CD4-positive, alpha-beta memory T cell (primary cell): ENCODE measurements at regions of chr3 and their contacts with region 1.

Region 1: DNA sequence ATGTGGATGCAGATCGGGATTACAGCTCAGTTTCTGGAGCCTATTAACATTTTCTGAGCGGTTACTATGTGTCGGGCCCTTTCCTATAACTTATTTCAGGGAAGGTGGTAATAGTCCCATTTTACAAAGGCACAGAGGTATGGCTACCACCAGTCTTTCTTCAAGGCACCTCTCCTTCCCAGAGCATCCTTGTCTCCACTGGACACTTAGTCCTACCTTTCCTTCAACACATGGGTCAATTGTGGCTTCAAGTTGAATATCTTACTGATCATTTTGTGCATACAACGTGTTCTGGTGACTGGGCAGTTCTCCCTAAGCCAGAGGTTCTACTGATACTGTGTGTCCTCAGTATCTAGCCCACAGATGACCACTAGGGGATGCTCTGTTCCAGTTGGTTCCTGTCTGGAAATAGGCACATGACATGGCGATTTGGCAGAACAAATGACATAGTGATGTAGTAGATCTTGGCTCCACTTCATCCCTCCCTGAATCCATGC is 60.7 kb upstream of the CMTM8 start:
- DNase-seq: peak; percentile 24 to 64 (median 44)
- H3K4me3 ChIP-seq: no peak overlapping the region
- H3K4me3 Mint-ChIP-seq: peak overlapping the region in 6 of 8 donors; percentile 54 to 68 (median 58)
- H3K27ac ChIP-seq: no peak overlapping the region
- H3K27ac Mint-ChIP-seq: peak overlapping the region in 4 of 7 donors; percentile 19 to 59 (median 28)
- H3K4me1 ChIP-seq: peaks cover 14% of the 10 kb centered on the region
- H3K4me1 Mint-ChIP-seq: peaks cover 8 to 12% (median 10%) of the 10 kb centered on the region in 4 donors
- H3K27me3 ChIP-seq: no peaks in the 10 kb centered on the region
- H3K27me3 Mint-ChIP-seq: no peaks in the 10 kb centered on the region

Region 2: DNA sequence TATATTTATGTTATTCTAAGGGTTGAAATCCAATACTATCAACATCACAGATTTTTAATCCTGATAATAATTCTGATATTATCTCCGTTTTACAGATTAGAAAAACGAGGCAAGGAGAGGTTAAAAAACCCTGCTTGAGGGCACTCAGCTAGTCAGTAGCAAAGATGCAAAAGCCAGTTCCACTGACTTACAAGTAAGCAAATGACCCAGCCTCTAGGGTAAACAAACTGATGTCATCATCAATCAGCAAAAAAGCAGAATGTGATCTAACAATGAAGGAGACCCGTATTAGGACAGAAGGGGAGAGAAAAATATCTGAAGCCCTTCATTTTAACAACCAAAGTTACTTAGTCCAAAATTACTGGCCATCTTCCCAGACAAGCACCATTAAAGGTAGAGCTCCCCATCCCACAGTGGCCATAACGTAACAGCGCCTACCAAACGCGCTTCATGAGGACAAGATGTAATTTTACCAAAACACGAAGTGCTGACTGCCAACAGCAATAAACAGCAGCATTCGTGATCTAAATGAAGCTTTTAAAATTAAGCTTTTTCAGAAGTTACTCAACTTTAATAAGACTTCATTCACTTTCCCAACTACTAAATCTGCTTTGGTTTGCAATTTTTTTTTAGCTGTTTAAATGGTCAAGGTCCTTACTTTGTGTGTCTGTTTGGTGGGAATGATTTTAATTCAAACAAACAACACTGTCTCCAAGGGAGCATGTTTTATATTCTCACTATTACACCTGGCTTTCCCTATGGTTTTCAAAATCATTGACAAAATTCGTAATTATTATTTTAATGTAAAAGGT is 373.3 kb before region 1 on chr3:
- CTCF ChIA-PET with region 1: no interaction called
- POLR2A ChIA-PET with region 1: no interaction called
- intact Hi-C with region 1: no loop called
- DNase-seq: no peak
- H3K4me3 ChIP-seq: no peak overlapping the region
- H3K4me3 Mint-ChIP-seq: no peak overlapping the region
- H3K27ac ChIP-seq: no peak overlapping the region
- H3K27ac Mint-ChIP-seq: no peak overlapping the region
- H3K4me1 ChIP-seq: no peaks in the 10 kb centered on the region
- H3K4me1 Mint-ChIP-seq: no peaks in the 10 kb centered on the region
- H3K27me3 ChIP-seq: no peaks in the 10 kb centered on the region
- H3K27me3 Mint-ChIP-seq: peaks cover 1 to 4% of the 10 kb centered on the region in 2 donors

Region 3: DNA sequence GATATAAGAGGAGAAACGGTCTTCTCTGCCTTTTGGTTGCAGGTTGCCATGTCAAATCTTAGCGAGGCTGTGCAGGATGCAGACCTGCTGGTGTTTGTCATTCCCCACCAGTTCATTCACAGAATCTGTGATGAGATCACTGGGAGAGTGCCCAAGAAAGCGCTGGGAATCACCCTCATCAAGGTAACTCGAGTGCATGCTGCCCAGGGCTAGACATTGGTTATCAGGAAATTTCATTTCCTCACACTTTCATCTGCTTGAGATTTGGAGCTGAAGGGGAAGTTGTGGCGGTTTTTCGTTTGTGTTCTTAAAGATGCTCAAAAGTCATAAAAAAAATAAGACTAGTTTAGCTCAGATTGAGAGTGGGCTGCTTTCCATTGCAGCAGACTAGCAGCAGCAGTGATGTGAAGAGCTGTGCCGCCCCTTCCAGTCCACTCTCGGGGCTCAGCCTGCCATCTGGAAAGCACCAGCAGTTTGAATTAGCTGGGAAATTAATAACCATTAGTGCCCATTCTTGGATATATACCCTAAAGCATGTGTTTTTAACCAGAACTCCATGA is 39.1 kb before region 1 on chr3:
- CTCF ChIA-PET with region 1: no interaction called
- POLR2A ChIA-PET with region 1: no interaction called
- intact Hi-C with region 1: no loop called
- DNase-seq: no peak
- H3K4me3 ChIP-seq: no peak overlapping the region
- H3K4me3 Mint-ChIP-seq: peak overlapping the region in 4 of 8 donors; percentile 22 to 59 (median 46)
- H3K27ac ChIP-seq: no peak overlapping the region
- H3K27ac Mint-ChIP-seq: peak overlapping the region in 4 of 7 donors; percentile 3 to 45 (median 6)
- H3K4me1 ChIP-seq: peaks cover 19% of the 10 kb centered on the region
- H3K4me1 Mint-ChIP-seq: peaks cover 19 to 36% (median 26%) of the 10 kb centered on the region in 4 donors
- H3K27me3 ChIP-seq: no peaks in the 10 kb centered on the region
- H3K27me3 Mint-ChIP-seq: no peaks in the 10 kb centered on the region

Region 4: GRCh38 chr3:32165442-32165841 is 12.3 kb before region 1 on chr3:
- CTCF ChIA-PET with region 1: interaction called, 10 read pairs
- POLR2A ChIA-PET with region 1: no interaction called
- intact Hi-C with region 1: no loop called
- DNase-seq: no peak
- H3K4me3 ChIP-seq: no peak overlapping the region
- H3K4me3 Mint-ChIP-seq: no peak overlapping the region
- H3K27ac ChIP-seq: no peak overlapping the region
- H3K27ac Mint-ChIP-seq: peak overlapping the region in 1 of 7 donors; percentile 22
- H3K4me1 ChIP-seq: no peaks in the 10 kb centered on the region
- H3K4me1 Mint-ChIP-seq: no peaks in the 10 kb centered on the region
- H3K27me3 ChIP-seq: no peaks in the 10 kb centered on the region
- H3K27me3 Mint-ChIP-seq: no peaks in the 10 kb centered on the region

Region 5: DNA sequence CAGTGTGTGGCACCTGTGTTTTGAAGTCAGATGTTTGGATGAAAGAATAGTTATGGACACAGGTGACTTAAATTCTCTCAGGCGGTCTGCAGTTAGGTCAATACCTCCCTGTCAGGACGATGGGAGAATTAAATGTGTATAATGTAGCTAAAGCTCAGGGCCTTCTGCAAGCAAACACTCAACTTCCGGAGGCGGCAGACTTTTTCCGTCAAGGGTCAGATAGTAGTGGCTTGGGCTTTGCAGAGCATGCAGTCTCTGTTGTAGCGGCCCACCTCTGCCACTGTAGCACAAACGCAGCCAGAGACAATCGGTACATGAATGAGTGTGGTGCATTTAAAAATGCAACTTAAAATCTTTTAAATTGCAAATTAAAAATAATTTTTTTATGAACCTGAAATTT is 108.1 kb after region 1 on chr3:
- CTCF ChIA-PET with region 1: interaction called, 76 read pairs
- POLR2A ChIA-PET with region 1: interaction called, 4 read pairs
- intact Hi-C with region 1: loop called (anchors 1 kb)
- DNase-seq: peak in 1 of 5 donors; percentile 46
- H3K4me3 ChIP-seq: no peak overlapping the region
- H3K4me3 Mint-ChIP-seq: peak overlapping the region in 7 of 8 donors; percentile 6 to 74 (median 59)
- H3K27ac ChIP-seq: peak overlapping the region; percentile 31
- H3K27ac Mint-ChIP-seq: peak overlapping the region; percentile 68 to 90 (median 83)
- H3K4me1 ChIP-seq: peaks cover 53% of the 10 kb centered on the region
- H3K4me1 Mint-ChIP-seq: peaks cover 30 to 62% (median 43%) of the 10 kb centered on the region in 4 donors
- H3K27me3 ChIP-seq: no peaks in the 10 kb centered on the region
- H3K27me3 Mint-ChIP-seq: no peaks in the 10 kb centered on the region

Region 6: DNA sequence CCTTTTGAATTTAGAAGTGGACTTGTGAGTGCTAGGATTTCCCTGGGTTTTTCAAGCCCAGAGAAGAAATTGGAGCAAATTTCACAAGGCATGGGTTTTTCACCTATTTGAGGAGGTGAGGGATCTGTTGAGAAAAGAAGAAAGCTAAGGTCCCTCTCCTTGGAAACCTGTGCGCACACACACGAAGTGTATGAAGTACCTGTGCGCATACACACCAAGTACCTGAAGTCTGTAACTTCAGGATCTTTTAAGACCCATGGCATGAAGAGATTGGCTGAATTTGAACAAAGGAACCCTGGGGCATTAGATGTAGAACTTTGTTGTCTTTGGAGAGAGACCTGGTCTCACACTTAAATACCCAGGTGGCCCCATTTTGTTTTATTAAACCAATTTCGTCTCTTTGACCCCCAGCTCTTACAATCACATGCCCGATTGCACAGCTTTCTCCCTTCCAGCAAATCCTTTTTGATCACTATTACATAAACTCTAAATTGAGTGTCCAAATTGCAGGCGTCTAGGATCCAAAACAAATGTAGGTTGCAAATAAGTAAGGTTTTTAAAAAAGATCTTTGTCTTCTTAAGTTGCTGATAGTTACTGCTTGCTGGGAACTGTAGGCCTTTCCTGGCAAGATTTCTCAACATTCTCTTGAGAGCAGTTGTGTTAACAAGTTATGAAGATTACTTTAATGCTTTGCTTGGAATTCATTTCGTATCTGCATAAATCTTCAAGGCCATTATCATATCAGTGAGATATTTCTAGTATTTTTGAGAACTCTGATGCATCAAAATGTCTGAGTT is 125.0 kb after region 1 on chr3:
- CTCF ChIA-PET with region 1: interaction called, 76 read pairs
- POLR2A ChIA-PET with region 1: interaction called, 3 read pairs
- intact Hi-C with region 1: loop called (anchors 1 kb)
- DNase-seq: no peak
- H3K4me3 ChIP-seq: peak overlapping the region in 1 of 2 donors; percentile 27
- H3K4me3 Mint-ChIP-seq: peak overlapping the region; percentile 37 to 82 (median 72)
- H3K27ac ChIP-seq: peak overlapping the region; percentile 60
- H3K27ac Mint-ChIP-seq: peak overlapping the region; percentile 83 to 97 (median 93)
- H3K4me1 ChIP-seq: peaks cover 75% of the 10 kb centered on the region
- H3K4me1 Mint-ChIP-seq: peaks cover 51 to 84% (median 71%) of the 10 kb centered on the region in 4 donors
- H3K27me3 ChIP-seq: no peaks in the 10 kb centered on the region
- H3K27me3 Mint-ChIP-seq: no peaks in the 10 kb centered on the region

Region 7: GRCh38 chr3:32313723-32314473 is 136.1 kb after region 1 on chr3:
- CTCF ChIA-PET with region 1: no interaction called
- POLR2A ChIA-PET with region 1: no interaction called
- intact Hi-C with region 1: no loop called
- DNase-seq: peak in 1 of 5 donors; percentile 47
- H3K4me3 ChIP-seq: no peak overlapping the region
- H3K4me3 Mint-ChIP-seq: peak overlapping the region; percentile 15 to 81 (median 51)
- H3K27ac ChIP-seq: peak overlapping the region; percentile 19
- H3K27ac Mint-ChIP-seq: peak overlapping the region; percentile 75 to 94 (median 86)
- H3K4me1 ChIP-seq: peaks cover 23% of the 10 kb centered on the region
- H3K4me1 Mint-ChIP-seq: peaks cover 24 to 40% (median 31%) of the 10 kb centered on the region in 4 donors
- H3K27me3 ChIP-seq: no peaks in the 10 kb centered on the region
- H3K27me3 Mint-ChIP-seq: no peaks in the 10 kb centered on the region

Region 8: DNA sequence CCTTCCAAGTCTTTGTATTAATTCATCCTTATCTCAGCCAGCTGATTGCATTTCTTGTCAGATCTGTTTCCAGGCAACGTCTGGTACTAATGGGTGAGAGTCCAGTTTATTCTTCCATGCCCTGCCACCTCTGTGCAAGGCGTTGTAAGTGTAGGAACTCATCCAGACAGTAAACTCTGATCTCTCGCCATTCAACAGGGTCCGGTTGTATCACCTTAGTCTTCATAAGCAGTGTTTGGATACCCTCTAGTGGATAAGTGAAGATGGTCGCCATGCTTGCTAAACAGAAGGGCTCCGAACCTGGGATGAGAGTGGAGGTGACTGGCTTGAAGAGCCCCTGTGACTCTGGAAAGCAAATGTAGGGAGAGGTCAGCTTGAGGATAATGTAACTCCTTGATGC is 162.3 kb after region 1 on chr3:
- CTCF ChIA-PET with region 1: interaction called, 145 read pairs
- POLR2A ChIA-PET with region 1: interaction called, 4 read pairs
- intact Hi-C with region 1: loop called (anchors 1 kb)
- DNase-seq: peak; percentile 41 to 55 (median 49)
- H3K4me3 ChIP-seq: no peak overlapping the region
- H3K4me3 Mint-ChIP-seq: no peak overlapping the region
- H3K27ac ChIP-seq: no peak overlapping the region
- H3K27ac Mint-ChIP-seq: no peak overlapping the region
- H3K4me1 ChIP-seq: peaks cover 24% of the 10 kb centered on the region
- H3K4me1 Mint-ChIP-seq: peaks cover 21 to 27% (median 24%) of the 10 kb centered on the region in 4 donors
- H3K27me3 ChIP-seq: no peaks in the 10 kb centered on the region
- H3K27me3 Mint-ChIP-seq: no peaks in the 10 kb centered on the region

Region 9: DNA sequence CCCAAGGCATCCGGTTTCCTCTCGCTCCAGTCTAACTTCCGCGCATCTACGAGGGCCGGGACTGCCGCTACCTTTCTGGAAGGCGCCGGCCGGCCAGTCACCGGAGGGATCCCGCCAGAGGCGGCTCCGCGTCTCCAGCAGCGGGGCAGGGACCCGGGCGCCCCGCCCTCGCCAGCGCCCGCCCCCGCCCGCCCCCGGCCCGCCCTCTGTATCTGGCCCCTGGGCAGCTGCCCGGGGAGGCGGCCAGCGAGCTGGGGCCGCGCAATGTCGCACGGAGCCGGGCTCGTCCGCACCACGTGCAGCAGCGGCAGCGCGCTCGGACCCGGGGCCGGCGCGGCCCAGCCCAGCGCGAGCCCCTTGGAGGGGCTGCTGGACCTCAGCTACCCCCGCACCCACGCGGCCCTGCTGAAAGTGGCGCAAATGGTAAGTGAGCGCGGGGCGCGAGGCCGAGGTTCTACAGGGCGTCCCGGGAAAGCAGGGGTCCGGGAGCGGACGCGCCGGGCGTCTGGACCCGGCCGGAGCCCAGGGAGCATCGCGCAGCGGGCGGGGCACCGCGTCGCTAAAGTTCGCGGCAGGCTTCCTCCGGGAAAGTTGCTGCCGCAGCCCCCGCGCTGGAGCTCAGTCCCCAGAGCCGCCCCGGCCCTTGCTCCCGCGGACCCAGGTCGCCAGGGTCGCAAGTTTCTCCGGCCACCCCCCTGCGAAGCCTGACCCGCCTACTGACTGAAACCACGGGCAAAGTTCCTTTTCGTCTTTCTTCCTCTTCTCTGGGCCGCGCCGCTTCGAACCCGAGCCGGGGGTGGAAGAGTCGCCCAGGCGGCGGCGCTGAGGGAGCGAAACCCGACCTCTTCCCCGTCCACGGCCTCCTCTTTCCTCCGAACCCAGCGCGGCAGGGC is 214.1 kb after region 1 on chr3 and contains the start of gene CMTM7:
- CTCF ChIA-PET with region 1: interaction called, 21 read pairs
- POLR2A ChIA-PET with region 1: no interaction called
- intact Hi-C with region 1: no loop called
- DNase-seq: peak; percentile 57 to 81 (median 67)
- H3K4me3 ChIP-seq: peak within 1 kb of the TSS; percentile 63 to 75
- H3K4me3 Mint-ChIP-seq: peak within 1 kb of the TSS; percentile 95 to 99 (median 97)
- H3K27ac ChIP-seq: peak within 1 kb of the TSS; percentile 76
- H3K27ac Mint-ChIP-seq: peak within 1 kb of the TSS; percentile 95 to 98 (median 97)
- H3K4me1 ChIP-seq: peaks cover 57% of the 10 kb centered on the region
- H3K4me1 Mint-ChIP-seq: peaks cover 36 to 64% (median 46%) of the 10 kb centered on the region in 4 donors
- H3K27me3 ChIP-seq: no peaks in the 10 kb centered on the region
- H3K27me3 Mint-ChIP-seq: no peaks in the 10 kb centered on the region
- total RNA-seq, gene CMTM7: 44.2 to 48.0 TPM

Region 10: DNA sequence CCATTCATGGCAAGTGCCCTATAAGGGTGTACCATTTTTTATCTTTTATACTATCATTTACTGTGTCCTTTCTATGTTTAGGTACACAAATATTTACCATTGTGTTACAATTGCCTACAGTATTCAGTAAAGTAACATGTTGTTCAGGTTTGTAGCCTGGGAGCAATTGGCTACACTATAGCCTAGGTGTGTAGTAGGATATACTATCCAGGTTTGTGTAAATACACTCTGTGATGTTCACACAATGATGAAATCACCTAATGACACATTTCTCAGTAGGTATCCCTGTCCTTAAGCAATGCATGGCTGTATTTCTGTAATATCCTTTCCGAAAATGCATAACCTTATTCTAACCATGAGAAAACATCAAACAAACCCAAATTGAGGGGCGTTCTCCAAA is 489.4 kb after region 1 on chr3:
- CTCF ChIA-PET with region 1: interaction called, 4 read pairs
- POLR2A ChIA-PET with region 1: no interaction called
- intact Hi-C with region 1: loop called (anchors 2 kb)
- DNase-seq: no peak
- H3K4me3 ChIP-seq: no peak overlapping the region
- H3K4me3 Mint-ChIP-seq: no peak overlapping the region
- H3K27ac ChIP-seq: no peak overlapping the region
- H3K27ac Mint-ChIP-seq: no peak overlapping the region
- H3K4me1 ChIP-seq: no peaks in the 10 kb centered on the region
- H3K4me1 Mint-ChIP-seq: no peaks in the 10 kb centered on the region
- H3K27me3 ChIP-seq: no peaks in the 10 kb centered on the region
- H3K27me3 Mint-ChIP-seq: peaks cover 3 to 5% of the 10 kb centered on the region in 2 donors